ENCODE measurements at regions of chr1 and their contacts with region 1.

Region 1: DNA sequence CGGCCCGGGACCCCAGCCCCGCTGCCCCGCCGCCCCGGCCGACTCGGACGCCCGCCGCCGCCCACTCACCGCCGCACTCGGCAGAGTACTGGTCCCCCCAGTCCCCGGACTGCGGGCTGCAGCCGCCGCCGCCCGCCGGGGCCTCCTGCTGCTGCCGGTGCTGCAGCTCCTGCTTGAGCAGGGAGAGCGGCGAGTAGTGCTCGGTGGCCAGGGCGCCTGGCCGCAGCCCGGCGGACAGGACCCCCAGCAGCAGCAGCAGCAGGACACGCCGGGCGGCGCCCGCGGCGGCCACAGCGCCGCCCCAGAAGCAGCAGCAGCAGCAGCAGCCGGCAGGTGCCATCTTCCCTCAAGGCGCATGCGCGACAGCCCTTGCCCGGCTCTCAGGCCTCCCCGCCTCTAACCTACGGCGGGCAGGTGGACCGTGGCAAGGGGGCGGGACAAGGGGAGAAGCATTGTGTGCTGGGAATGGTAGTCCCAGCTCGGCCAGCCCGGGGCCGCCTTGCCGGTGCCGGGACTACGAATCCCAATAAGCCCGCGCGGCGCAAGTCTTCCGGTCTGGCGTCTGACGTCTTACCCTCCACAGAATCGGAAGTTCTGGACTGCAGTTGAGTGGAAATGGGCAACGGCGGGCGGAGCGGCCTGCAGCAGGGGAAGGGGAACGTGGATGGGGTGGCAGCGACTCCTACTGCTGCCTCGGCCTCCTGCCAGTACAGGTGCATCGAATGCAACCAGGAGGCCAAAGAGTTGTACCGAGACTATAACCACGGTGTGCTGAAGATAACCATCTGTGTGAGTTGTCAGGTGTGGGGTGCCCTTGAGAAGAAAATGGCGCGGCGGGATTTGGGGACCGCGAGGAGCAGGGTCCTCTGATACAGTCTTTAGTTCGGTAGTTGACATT is at the starts of genes ARV1 and TTC13:
- DNase-seq: peak; percentile 97
- H3K4me3 Mint-ChIP-seq: peak within 1 kb of the TSS; percentile 95
- H3K27ac Mint-ChIP-seq: peak within 1 kb of the TSS; percentile 92
- H3K4me1 Mint-ChIP-seq: peaks cover 30% of the 10 kb centered on the region
- H3K27me3 Mint-ChIP-seq: no peaks in the 10 kb centered on the region
- total RNA-seq, gene ARV1: 14.9 to 17.7 TPM
- total RNA-seq, gene TTC13: 10.9 to 13.2 TPM

Region 2: GRCh38 chr1:230797942-230798418 is 180.8 kb before region 1 on chr1:
- CTCF ChIA-PET with region 1: no interaction called
- intact Hi-C with region 1: loop called (anchors 1 kb)
- DNase-seq: peak; percentile 23
- H3K4me3 Mint-ChIP-seq: no peak overlapping the region
- H3K27ac Mint-ChIP-seq: no peak overlapping the region
- H3K4me1 Mint-ChIP-seq: no peaks in the 10 kb centered on the region
- H3K27me3 Mint-ChIP-seq: peaks cover 12% of the 10 kb centered on the region

Region 3: DNA sequence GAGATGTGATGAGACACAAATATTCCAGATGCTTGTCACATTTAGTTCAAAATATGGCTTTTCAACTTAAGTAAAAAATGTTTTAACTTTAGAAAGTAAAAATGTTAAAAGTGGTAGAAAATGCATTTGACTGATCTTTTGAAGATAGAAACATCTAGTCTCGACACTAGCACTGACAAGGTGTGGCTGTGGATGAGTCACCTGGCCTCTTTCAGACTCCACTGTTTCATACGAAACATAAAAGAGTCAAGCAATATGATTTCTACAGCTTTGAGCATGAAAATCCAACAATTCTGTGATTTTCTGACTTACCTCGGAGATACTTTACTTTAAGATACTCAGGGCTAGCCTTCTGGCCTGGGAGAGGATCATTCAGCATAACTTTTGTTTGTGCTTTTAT is 47.8 kb before region 1 on chr1:
- CTCF ChIA-PET with region 1: interaction called, 3 read pairs
- intact Hi-C with region 1: loop called (anchors 5 kb)
- DNase-seq: peak; percentile 16
- H3K4me3 Mint-ChIP-seq: no peak overlapping the region
- H3K27ac Mint-ChIP-seq: peak overlapping the region; percentile 29
- H3K4me1 Mint-ChIP-seq: no peaks in the 10 kb centered on the region
- H3K27me3 Mint-ChIP-seq: no peaks in the 10 kb centered on the region

Region 4: GRCh38 chr1:231240883-231241735 is 262.4 kb after region 1 on chr1 and contains the start of gene GNPAT:
- CTCF ChIA-PET with region 1: no interaction called
- intact Hi-C with region 1: loop called (anchors 1 kb)
- DNase-seq: peak; percentile 90
- H3K4me3 Mint-ChIP-seq: peak within 1 kb of the TSS; percentile 97
- H3K27ac Mint-ChIP-seq: peak within 1 kb of the TSS; percentile 82
- H3K4me1 Mint-ChIP-seq: peaks cover 58% of the 10 kb centered on the region
- H3K27me3 Mint-ChIP-seq: no peaks in the 10 kb centered on the region
- total RNA-seq, gene GNPAT: 60.4 to 62.0 TPM

Region 5: GRCh38 chr1:231348442-231348841 is 369.7 kb after region 1 on chr1:
- CTCF ChIA-PET with region 1: no interaction called
- intact Hi-C with region 1: no loop called
- DNase-seq: no peak
- H3K4me3 Mint-ChIP-seq: no peak overlapping the region
- H3K27ac Mint-ChIP-seq: no peak overlapping the region
- H3K4me1 Mint-ChIP-seq: no peaks in the 10 kb centered on the region
- H3K27me3 Mint-ChIP-seq: no peaks in the 10 kb centered on the region

Region 6: DNA sequence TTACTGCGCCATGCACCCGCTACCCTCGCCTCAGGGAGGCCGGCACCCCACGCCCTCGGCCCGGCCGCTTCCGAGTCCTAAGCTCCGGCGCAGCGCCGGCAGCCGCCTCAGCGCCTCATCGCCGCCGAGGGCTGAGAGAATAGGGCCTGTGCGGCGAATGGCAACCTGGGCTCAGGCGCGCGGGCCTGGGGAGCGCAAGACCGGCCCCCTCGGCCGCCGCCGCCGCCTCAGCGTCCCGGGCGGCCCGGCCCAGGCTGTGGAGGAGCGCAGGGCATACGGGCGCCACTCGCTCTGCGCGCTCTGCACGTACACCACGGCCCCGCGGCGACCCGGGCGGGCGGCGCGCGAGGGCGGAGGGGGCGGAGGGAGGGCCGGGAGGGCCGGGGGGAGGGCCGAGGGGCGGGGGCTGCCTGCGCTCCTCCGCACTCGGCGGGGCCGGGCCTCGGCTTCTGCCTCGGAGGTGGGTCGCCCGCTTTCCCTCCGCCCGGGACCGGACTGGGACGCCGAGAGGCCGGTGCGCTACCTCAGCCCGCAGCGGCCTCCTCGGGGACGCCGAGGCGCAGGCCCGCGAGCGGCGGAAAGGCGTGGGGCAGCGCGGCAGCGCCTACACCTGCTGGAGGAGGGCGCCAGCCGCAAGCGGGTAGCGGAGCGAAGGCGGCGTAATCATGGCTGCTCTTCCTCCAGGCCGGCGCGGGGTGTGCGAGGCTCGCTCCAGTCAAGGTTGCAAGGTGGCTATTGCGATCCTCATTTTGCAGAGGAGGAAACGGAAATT is 443.4 kb after region 1 on chr1 and contains the start of gene EGLN1:
- CTCF ChIA-PET with region 1: no interaction called
- intact Hi-C with region 1: loop called (anchors 5 kb)
- DNase-seq: peak; percentile 79
- H3K4me3 Mint-ChIP-seq: peak within 1 kb of the TSS; percentile 81
- H3K27ac Mint-ChIP-seq: peak within 1 kb of the TSS; percentile 89
- H3K4me1 Mint-ChIP-seq: peaks cover 35% of the 10 kb centered on the region
- H3K27me3 Mint-ChIP-seq: no peaks in the 10 kb centered on the region
- total RNA-seq, gene EGLN1: 9.6 to 9.8 TPM

Region 7: DNA sequence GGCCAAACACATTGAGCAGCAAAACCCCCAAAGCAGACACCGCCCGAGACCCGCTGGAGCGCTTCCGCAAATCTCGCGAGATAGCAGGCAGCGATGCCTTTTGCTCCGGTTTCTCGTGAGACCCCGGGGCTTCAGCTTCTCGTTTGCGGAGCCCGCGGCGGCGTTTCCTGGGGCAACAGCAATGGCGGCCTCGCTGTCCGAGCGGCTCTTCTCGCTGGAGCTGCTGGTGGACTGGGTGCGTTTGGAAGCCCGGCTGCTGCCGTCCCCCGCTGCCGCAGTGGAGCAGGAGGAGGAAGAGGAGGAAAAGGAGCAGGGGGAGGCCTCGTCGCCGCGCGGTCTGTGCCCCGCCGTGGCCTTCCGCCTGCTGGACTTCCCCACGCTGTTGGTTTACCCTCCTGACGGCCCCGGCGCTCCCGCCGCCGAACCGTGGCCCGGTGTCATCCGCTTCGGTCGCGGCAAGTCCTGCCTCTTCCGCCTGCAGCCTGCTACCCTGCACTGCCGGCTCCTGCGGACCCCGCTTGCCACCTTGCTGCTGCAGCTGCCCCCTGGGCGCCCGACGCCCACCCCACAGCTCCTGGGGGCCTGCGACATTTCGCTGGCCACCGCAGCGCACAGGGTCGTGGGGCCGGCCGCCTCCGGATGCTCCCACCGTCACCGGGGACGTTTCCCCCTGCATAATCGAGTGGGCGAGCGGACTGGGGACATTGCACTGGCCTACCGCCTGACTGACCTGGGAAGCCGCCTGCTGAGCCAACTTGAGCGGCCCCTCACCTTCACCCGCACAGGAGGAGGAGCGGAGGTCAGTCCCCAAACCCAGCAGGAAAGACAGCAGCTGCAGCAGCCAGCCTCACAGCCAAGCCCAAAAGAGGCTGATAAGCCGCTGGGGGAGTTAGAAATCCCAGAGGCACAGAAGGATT is 1826.8 kb after region 1 on chr1 and contains the start of gene MAP10:
- CTCF ChIA-PET with region 1: no interaction called
- intact Hi-C with region 1: loop called (anchors 5 kb)
- DNase-seq: peak; percentile 85
- H3K4me3 Mint-ChIP-seq: peak within 1 kb of the TSS; percentile 81
- H3K27ac Mint-ChIP-seq: peak within 1 kb of the TSS; percentile 59
- H3K4me1 Mint-ChIP-seq: peaks cover 17% of the 10 kb centered on the region
- H3K27me3 Mint-ChIP-seq: peaks cover 2% of the 10 kb centered on the region
- total RNA-seq, gene MAP10: 0.43 to 0.54 TPM

Measured in activated naive CD4-positive, alpha-beta T cell treated with anti-CD3 and anti-CD28 coated beads for 36 hours (primary cell).